Gastrocnemius medialis (tissue), 4 donors: ENCODE measurements at regions of chr1 and their contacts with region 1.

Region 1: DNA sequence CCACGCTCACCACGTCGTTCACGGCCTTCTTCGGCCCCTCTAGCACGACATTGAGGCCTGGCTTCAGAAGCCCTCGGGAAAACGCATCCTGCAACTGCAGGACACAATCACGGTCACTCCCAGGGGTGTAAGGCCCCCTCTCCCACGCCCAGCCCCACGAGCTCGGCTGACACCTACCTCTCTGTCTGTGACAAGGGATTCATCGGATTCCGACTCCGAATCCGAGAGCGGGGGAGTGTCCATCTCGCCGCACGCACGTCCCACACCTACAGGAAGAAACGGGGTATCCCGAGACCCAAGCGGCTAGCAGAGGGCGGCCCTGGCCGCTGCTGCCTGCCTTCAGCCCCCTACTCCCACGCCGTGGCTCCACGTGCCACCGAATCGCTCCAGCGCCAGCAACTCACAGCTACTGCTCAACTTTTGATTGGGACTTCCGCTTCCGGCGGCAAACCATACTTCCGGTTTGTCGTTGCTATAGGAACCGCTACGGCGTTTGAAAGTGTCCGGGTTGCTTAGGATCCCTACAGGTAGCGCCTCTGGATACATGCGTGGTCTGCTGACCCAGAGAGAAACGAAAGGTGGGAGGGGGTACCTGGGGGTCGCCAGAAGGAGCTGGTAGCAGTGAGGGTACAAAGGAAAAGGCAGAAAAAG is at the starts of genes CFAP57 and EBNA1BP2:
- DNase-seq: peak; percentile 79 to 90
- ATAC-seq: peak; percentile 99 to 100
- H3K4me3 ChIP-seq: peak within 1 kb of the TSS; percentile 85 to 94 (median 92)
- H3K27ac ChIP-seq: peak within 1 kb of the TSS; percentile 50 to 81 (median 74)
- H3K4me1 ChIP-seq: peaks cover 14% of the 10 kb centered on the region in 2 donors
- H3K27me3 ChIP-seq: peaks cover 0 to 8% (median 0%) of the 10 kb centered on the region in 3 donors
- CTCF ChIP-seq: no peak
- POLR2A ChIP-seq: peak in 1 of 2 donors; percentile 29
- total RNA-seq, gene CFAP57: 0.10 to 0.13 TPM in 2 of 4 donors, not detected in the others
- total RNA-seq, gene EBNA1BP2: 41.2 to 68.4 (median 59.1) TPM

Region 2: GRCh38 chr1:42456010-42456758 is 715.8 kb before region 1 on chr1 and contains the starts of genes PPCS and ZMYND12:
- in situ Hi-C with region 1: no loop called
- intact Hi-C with region 1: loop called (anchors 5 kb)
- DNase-seq: peak; percentile 67 to 79
- ATAC-seq: peak; percentile 91 to 93
- H3K4me3 ChIP-seq: peak within 1 kb of the TSS; percentile 86 to 99 (median 90)
- H3K27ac ChIP-seq: peak within 1 kb of the TSS; percentile 90 to 95 (median 94)
- H3K4me1 ChIP-seq: peaks cover 13 to 19% of the 10 kb centered on the region in 2 donors
- H3K27me3 ChIP-seq: no peaks in the 10 kb centered on the region
- CTCF ChIP-seq: peak in 3 of 5 experiments; percentile 13 to 35 (median 16)
- POLR2A ChIP-seq: peak in 1 of 2 donors; percentile 66
- total RNA-seq, gene PPCS: 31.7 to 55.1 (median 42.1) TPM
- total RNA-seq, gene ZMYND12: 0.80 to 1.0 TPM in 2 of 4 donors, not detected in the others

Region 3: GRCh38 chr1:42646056-42646455 is 525.9 kb before region 1 on chr1:
- in situ Hi-C with region 1: no loop called
- intact Hi-C with region 1: no loop called
- DNase-seq: no peak
- ATAC-seq: no peak
- H3K4me3 ChIP-seq: no peak overlapping the region
- H3K27ac ChIP-seq: no peak overlapping the region
- H3K4me1 ChIP-seq: no peaks in the 10 kb centered on the region
- H3K27me3 ChIP-seq: no peaks in the 10 kb centered on the region
- CTCF ChIP-seq: no peak
- POLR2A ChIP-seq: no peak

Region 4: GRCh38 chr1:42924082-42924850 is 247.7 kb before region 1 on chr1:
- in situ Hi-C with region 1: no loop called
- intact Hi-C with region 1: loop called (anchors 10 kb)
- DNase-seq: peak; percentile 76 to 84
- ATAC-seq: peak; percentile 92
- H3K4me3 ChIP-seq: peak overlapping the region; percentile 67 to 83 (median 76)
- H3K27ac ChIP-seq: peak overlapping the region; percentile 75 to 85 (median 77)
- H3K4me1 ChIP-seq: peaks cover 3 to 10% of the 10 kb centered on the region in 2 donors
- H3K27me3 ChIP-seq: peaks cover 4 to 17% (median 10%) of the 10 kb centered on the region in 3 donors
- CTCF ChIP-seq: peak in 1 of 5 experiments; percentile 9
- POLR2A ChIP-seq: peak; percentile 51 to 67

Region 5: GRCh38 chr1:43650310-43651085 is 478.5 kb after region 1 on chr1:
- in situ Hi-C with region 1: no loop called
- intact Hi-C with region 1: loop called (anchors 5 kb)
- DNase-seq: peak; percentile 97
- ATAC-seq: peak; percentile 97
- H3K4me3 ChIP-seq: peak overlapping the region; percentile 85 to 93 (median 90)
- H3K27ac ChIP-seq: peak overlapping the region; percentile 92 to 99 (median 96)
- H3K4me1 ChIP-seq: peaks cover 15 to 23% of the 10 kb centered on the region in 2 donors
- H3K27me3 ChIP-seq: no peaks in the 10 kb centered on the region
- CTCF ChIP-seq: no peak
- POLR2A ChIP-seq: peak; percentile 92 to 94